ENCODE measurements at regions of chr20 and their contacts with region 1.

Region 1: DNA sequence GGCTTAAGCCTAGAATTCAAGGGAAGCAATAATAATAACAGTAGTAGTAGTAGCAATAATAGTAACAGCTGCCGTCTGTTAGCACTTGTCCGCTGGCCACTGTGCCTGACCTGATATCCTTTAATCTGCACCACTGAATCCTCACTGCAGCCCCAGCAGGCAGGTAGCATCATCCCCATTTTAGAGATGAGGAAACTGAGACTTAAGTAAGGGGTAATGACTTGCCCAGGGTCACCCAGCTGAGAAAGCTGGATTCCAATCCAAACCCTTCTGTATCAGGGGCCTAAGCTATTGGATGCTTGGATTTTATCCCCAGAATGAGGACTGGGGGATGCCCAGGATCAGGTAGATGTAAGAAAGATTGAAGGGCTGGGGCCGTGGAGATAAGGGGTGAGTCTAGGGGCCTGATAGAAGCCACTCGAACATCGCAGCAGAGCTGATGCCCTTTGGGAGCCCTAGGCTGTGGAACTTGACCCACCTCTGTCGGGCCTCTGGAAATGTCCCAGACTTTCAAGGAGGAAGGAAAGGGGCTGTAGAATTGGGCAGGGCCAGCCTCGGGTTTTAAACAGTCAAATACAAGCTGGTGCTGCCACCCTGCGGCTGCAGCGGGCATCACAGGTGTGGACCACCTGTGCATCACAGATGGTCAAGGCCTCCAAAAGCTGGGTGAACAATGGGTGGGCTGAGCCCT is 102.1 kb upstream of the MYL9 start:
- ATAC-seq: peak; percentile 23 to 90 (median 76)
- H3K4me3 ChIP-seq: no peak overlapping the region
- H3K27ac ChIP-seq: no peak overlapping the region
- H3K4me1 ChIP-seq: peaks cover 6 to 13% of the 10 kb centered on the region in 2 donors

Region 2: DNA sequence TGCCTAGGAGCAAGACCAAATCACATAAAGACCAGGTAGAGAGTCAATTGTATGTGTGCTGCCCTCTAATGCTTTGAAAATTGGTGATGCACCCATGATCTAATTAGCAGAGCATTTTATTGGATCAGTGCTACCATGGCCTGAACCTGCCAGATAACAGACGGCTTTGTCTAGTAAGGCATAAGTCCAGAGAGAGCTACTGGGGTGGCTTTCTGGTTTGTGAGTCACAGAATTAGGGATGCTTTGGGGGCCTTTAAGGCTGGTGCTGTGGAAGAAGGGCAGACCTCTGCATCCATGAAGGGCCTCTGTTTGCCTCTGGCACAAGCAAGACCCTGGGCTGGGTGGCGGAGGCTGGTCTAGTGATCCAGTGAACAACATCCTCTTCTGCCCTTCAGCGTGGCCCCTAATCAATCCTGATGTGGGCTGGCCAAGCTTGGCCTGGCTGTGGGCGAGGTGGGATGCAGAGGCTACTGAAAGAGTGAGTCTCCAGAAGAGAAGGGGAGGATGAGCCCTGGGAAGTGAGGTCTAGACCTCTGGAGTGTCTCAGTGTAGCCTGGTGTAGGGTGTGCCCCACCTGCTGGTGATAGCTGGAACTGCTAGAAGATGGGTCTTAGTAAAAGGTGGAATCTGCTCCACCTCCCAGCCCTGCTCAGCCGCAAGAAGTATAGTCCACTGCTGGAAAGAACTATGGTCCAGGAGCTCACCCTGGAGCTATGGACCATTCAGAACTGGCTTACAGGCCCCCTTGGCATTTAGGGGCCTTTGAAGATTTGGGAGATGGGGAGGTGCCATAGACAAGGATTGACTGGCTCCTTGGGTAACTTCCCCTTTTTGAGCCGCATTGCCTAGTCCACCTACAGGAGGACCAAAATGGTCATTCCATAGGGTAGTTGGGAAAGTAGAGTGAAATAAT is 239.6 kb before region 1 on chr20:
- in situ Hi-C with region 1: loop called in 7 of 9 experiments (anchors 25 kb)
- ATAC-seq: peak; percentile 83 to 96 (median 90)
- H3K4me3 ChIP-seq: no peak overlapping the region
- H3K27ac ChIP-seq: no peak overlapping the region
- H3K4me1 ChIP-seq: peaks cover 0 to 3% of the 10 kb centered on the region in 2 donors

Region 3: GRCh38 chr20:36273414-36274180 is 165.6 kb before region 1 on chr20:
- in situ Hi-C with region 1: loop called in 1 of 9 experiments (anchors 10 kb)
- ATAC-seq: peak in 5 of 8 experiments; percentile 44 to 86 (median 65)
- H3K4me3 ChIP-seq: no peak overlapping the region
- H3K27ac ChIP-seq: peak overlapping the region in 1 of 2 donors; percentile 31
- H3K4me1 ChIP-seq: peaks cover 8 to 22% of the 10 kb centered on the region in 2 donors